ENCODE measurements at regions of chr6 and their contacts with region 1.

Region 1: DNA sequence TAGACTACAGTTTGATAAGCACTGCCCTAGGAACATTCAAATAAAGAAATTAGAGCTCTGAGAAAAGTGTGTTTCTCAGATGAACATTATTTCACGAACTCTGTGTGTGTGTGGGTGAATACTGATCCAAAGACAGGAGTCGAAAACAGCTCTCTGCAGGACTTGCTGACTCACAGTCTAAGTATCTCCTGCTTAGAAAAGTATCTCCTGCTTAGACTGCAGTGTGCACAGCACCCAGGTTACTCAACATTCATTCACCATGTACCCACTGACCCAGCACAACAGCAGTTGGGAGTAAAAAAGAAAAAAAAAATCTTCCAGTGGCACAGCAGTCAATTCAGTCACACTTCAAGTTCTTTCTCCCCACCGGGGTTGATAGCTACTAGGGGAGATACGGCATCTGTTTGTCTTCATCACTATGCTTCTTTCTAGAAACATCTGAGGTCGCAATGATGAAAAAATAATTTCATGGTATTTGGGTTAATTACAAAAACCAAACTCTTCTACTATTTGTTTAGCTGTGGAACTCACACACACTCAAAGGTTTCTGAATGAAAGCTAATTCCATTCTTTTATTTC is 48.0 kb downstream of the GCLC start:
- DNase-seq: no peak
- ATAC-seq: peak; percentile 86
- H3K4me3 ChIP-seq: no peak overlapping the region
- H3K27ac ChIP-seq: no peak overlapping the region
- H3K4me1 ChIP-seq: peaks cover 4 to 7% of the 10 kb centered on the region in 2 donors
- H3K27me3 ChIP-seq: no peaks in the 10 kb centered on the region
- CTCF ChIP-seq: no peak

Region 2: GRCh38 chr6:53398247-53399026 is 98.4 kb before region 1 on chr6:
- intact Hi-C with region 1: no loop called
- DNase-seq: no peak
- ATAC-seq: no peak
- H3K4me3 ChIP-seq: no peak overlapping the region
- H3K27ac ChIP-seq: no peak overlapping the region
- H3K4me1 ChIP-seq: no peaks in the 10 kb centered on the region
- H3K27me3 ChIP-seq: no peaks in the 10 kb centered on the region
- CTCF ChIP-seq: no peak

Region 3: DNA sequence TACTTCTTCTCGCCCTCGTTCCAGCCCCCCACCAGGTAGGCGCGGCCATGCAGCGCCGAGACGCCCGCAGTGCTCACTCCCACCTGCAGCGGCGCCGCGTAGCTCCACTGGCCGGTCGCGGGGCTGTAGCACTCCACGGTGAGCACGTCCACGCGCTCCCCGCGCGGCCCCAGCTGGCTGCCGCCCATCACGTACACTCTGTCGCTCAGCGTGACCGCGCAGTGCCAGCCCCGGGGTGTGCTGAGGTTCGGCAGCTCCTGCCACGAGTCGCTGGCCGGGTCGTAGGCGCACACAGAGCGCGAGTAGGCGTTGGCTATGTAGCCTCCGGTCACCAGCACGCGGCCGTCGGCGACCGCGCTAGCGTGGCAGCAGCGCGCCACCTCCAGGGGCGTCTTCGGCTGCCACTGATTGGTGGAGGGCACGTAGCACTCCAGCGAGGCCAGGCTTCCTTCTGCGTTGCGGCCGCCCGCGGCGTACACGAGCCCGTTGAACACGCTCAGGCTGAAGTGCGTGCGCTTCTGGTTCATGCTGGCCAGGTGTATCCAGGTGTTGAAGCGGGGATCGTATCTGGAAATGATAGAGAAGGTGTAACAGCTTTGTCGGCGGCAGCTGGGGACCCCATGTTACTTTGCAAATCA is 155.0 kb after region 1 on chr6:
- intact Hi-C with region 1: loop called in 1 of 2 experiments (anchors 5 kb)
- DNase-seq: peak; percentile 65 to 94 (median 82)
- ATAC-seq: peak; percentile 97
- H3K4me3 ChIP-seq: peak overlapping the region; percentile 50 to 52
- H3K27ac ChIP-seq: peak overlapping the region in 1 of 2 donors; percentile 59
- H3K4me1 ChIP-seq: peaks cover 6 to 21% of the 10 kb centered on the region in 2 donors
- H3K27me3 ChIP-seq: peaks cover 0 to 50% of the 10 kb centered on the region in 2 donors
- CTCF ChIP-seq: peak in 1 of 2 donors; percentile 41

Region 4: DNA sequence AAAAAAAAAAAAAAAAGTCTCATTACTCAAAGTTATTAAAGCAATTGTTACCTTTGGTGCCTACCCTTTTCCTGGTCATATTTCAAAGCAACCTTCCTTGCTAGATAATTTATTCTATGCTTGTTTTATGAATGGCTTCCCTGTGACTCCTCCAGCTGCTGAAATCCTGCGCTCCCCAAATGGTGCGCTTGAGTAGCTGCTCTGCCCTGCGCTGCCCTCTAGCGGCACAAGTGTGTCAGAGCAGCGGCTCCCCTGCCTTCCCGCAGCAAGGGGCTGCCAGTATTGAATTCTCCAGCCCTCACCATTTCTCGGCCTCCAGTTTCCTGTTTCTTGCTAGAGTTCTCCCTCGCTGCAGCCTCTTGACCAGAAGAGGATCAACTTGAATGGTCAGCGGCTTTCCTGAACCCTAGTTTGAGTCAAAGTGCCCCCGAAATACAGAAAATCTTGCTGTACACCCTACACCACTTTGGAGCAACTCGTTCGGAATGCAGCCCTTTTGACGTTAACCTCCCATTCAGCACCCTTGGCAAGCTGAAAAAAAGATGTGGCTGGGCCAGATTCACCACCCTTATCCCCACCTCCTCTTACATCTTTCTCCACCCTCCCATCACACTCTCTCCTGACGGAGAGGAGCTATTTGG is 229.0 kb after region 1 on chr6:
- intact Hi-C with region 1: loop called in 1 of 2 experiments (anchors 5 kb)
- DNase-seq: peak; percentile 66 to 94 (median 81)
- ATAC-seq: peak; percentile 96
- H3K4me3 ChIP-seq: no peak overlapping the region
- H3K27ac ChIP-seq: no peak overlapping the region
- H3K4me1 ChIP-seq: peaks cover 0 to 6% of the 10 kb centered on the region in 2 donors
- H3K27me3 ChIP-seq: peaks cover 0 to 6% of the 10 kb centered on the region in 2 donors
- CTCF ChIP-seq: peak; percentile 93 to 94

Region 5: GRCh38 chr6:53829698-53830221 is 332.9 kb after region 1 on chr6:
- intact Hi-C with region 1: no loop called
- DNase-seq: no peak
- ATAC-seq: peak; percentile 24
- H3K4me3 ChIP-seq: no peak overlapping the region
- H3K27ac ChIP-seq: no peak overlapping the region
- H3K4me1 ChIP-seq: no peaks in the 10 kb centered on the region
- H3K27me3 ChIP-seq: no peaks in the 10 kb centered on the region
- CTCF ChIP-seq: no peak

Region 6: DNA sequence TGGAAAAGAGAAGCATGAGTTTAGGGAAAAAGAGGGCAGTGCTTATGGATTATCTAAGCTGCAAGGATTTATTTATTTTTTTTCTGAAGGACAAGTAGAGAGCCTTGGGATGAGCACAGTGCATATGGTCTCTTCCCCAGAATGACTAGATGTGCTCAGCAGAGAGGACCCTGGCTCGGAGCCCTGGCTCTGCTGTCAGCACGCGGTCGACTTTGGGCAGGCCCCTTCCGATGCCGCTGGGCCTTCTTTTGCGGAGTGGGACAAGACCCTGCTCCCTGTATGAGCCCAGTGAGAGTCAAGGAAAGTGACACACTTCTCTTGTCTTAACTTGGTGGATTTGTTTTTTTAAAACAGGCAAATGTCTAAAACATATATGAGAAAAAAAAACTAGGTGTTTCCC is 349.4 kb after region 1 on chr6:
- intact Hi-C with region 1: no loop called
- DNase-seq: peak in 1 of 4 donors; percentile 69
- ATAC-seq: no peak
- H3K4me3 ChIP-seq: no peak overlapping the region
- H3K27ac ChIP-seq: no peak overlapping the region
- H3K4me1 ChIP-seq: no peaks in the 10 kb centered on the region
- H3K27me3 ChIP-seq: no peaks in the 10 kb centered on the region
- CTCF ChIP-seq: no peak